MCF 10A (cell line): ENCODE measurements at regions of chr7 and their contacts with region 1.

Region 1: DNA sequence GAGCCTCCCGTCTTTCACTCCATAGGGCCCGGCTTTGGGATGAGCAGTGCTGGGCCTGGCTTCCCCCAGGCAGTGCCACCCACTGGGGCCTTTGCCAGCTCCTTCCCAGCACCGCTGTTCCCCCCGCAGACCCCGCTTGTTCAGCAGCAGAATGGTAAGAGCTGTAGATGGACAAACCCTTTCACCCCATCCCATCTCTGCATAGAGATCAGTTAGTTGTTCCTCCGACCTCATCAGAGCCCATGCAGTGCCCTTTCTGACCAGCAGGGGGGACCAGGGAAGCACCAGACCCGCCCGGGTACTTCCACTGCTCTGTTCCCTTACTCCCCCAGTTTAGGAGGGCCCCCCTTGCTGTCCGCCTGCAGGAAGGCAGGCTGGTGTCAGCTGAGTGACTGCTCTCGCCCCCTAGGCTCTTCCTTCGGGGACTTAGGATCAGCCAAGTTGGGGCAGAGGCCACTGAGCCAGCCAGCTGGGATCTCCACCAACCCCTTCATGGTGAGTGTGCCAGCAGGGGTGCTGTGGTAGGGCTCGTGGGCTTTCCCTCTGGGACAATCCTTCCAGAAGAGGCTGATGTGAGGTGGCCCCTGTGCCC is 9.8 kb downstream of the SAP25 start:
- DNase-seq: peak; percentile 60
- H3K4me3 Mint-ChIP-seq: no peak overlapping the region
- H3K27ac Mint-ChIP-seq: no peak overlapping the region
- H3K4me1 Mint-ChIP-seq: no peaks in the 10 kb centered on the region
- H3K27me3 Mint-ChIP-seq: no peaks in the 10 kb centered on the region
- CTCF ChIP-seq: peak; percentile 78

Region 2: DNA sequence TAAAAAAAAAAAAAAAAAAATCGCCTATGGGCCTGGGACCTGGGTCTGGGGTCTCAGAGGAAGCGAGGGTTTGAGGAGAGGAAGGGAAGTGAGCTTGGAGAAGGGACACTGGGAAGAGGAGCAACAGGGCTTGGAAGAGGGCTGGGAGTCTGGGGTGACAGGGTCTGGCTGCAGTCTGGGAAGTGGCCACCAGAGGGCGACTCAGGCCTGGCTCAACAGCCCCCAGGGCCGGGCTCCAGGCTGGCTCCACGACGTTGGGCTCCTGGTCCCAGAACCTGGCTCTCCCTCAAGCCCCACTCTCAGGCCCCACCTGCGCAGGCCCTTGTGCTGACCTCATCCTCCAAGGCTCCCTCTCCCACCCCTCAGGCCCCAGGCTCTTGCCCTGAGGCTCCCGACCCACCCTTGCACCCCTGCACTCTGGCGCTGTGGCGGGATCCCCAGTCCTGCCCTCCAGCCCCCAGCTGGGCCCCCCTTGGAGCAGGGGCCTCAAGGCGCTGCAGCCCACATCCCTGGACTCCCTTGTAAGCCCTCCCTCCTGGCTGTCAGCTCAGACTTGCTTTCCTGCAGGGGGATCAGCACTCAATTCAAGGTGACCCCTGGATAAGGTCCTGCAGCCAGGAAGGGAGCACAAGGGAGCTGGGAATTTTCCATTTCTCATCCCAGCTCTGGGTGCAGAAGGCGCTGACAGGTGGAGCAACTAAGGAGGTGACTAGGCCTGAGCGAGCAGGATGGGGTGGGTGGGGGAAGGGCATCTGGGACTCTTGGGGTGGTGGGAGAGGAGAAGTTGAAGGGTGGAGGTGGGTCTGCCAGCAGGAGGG is 94.5 kb before region 1 on chr7:
- CTCF ChIA-PET with region 1: interaction called, 95 read pairs
- POLR2A ChIA-PET with region 1: interaction called, 3 read pairs
- intact Hi-C with region 1: loop called (anchors 1 kb)
- DNase-seq: peak; percentile 64
- H3K4me3 Mint-ChIP-seq: no peak overlapping the region
- H3K27ac Mint-ChIP-seq: no peak overlapping the region
- H3K4me1 Mint-ChIP-seq: peaks cover 5% of the 10 kb centered on the region
- H3K27me3 Mint-ChIP-seq: no peaks in the 10 kb centered on the region
- CTCF ChIP-seq: peak; percentile 94

Region 3: DNA sequence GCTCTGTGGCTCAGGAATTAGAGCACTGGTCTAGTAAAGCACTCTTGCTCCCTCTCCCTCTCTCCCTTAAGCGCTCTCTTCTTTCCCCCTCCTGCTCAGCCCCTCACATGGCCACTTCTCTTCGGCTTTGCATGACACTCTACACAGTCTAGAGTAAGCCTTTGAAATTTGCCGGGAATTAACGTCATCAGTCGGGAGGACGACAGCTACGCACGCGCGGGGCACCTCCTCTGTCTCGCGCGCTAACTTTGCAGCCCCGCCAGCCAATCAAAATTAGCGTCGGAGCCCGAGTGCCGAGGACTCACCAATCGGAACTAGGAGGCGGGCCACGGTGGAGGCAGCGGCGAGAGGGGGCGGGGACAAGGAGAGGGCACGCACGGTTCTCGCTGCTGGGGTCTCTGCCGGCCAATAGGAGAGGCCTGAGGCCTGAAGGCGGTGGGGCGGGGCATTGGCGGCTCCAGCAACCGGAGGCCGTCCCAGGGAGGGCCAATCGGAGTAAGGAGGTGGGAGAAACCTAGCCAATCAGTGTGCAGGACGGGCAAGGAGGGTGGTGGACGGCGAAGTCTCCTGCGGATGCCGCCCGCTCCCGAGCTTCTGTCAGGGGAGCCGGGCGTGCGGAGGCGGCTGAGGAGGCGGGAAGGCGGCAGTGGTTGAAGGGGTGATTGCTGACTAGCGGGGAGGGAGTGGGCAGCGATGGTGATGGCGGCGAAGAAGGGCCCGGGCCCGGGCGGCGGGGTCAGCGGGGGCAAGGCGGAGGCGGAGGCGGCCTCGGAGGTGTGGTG is 25.1 kb before region 1 on chr7 and contains the start of gene AGFG2:
- CTCF ChIA-PET with region 1: interaction called, 23 read pairs
- POLR2A ChIA-PET with region 1: interaction called, 5 read pairs
- intact Hi-C with region 1: no loop called
- DNase-seq: peak; percentile 100
- H3K4me3 Mint-ChIP-seq: peak within 1 kb of the TSS; percentile 81
- H3K27ac Mint-ChIP-seq: peak within 1 kb of the TSS; percentile 36
- H3K4me1 Mint-ChIP-seq: peaks cover 28% of the 10 kb centered on the region
- H3K27me3 Mint-ChIP-seq: no peaks in the 10 kb centered on the region
- CTCF ChIP-seq: no peak
- total RNA-seq, gene AGFG2: 8.4 and 11.9 TPM in 2 replicates

Region 4: GRCh38 chr7:100545360-100546128 is 18.4 kb before region 1 on chr7:
- CTCF ChIA-PET with region 1: interaction called, 52 read pairs
- POLR2A ChIA-PET with region 1: interaction called, 3 read pairs
- intact Hi-C with region 1: no loop called
- DNase-seq: peak; percentile 94
- H3K4me3 Mint-ChIP-seq: peak overlapping the region; percentile 1
- H3K27ac Mint-ChIP-seq: peak overlapping the region; percentile 78
- H3K4me1 Mint-ChIP-seq: peaks cover 48% of the 10 kb centered on the region
- H3K27me3 Mint-ChIP-seq: no peaks in the 10 kb centered on the region
- CTCF ChIP-seq: no peak